ENCODE measurements at regions of chr11 and their contacts with region 1.

Region 1: DNA sequence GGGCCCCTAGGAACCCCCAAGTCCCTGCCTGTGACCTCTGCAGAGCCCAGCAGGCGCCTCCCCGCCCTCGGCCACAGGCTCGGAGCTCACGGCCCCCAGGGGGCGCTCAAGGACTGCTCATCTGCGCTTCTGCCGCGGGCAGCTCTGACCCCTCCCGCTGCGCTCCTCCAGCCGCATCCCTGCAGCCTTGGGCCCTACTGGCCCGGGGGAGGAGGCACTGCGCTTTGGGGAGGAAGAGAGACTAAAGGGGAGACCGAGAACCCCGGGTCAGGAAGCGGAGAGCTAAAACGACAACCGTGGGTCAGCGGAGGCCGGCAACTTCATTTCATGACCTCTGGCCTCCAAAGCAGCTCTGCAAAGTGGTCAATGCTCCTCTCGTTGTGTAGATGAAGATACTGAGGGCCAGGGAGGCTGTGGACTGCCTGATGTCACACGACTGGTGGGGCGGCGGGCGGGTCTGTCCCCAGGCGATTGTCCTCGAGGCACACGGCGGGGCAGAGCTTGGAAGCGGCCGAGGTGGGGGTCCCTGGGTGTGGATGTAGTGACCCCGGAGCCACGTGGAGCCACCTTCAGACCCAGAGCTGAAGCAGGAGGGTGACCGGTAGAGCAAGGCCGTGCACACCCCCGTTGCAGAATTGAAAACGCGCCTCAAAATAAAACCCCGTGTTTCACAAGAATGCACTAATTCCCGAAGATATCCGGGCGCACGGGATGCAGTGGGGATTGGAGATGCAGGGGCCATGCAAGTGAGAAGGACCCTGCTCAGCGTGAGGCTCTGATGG is 2.7 kb upstream of the KRTAP5-6 start:
- DNase-seq: peak; percentile 95
- H3K4me3 Mint-ChIP-seq: no peak overlapping the region
- H3K27ac Mint-ChIP-seq: no peak overlapping the region
- H3K4me1 Mint-ChIP-seq: peaks cover 5% of the 10 kb centered on the region
- H3K27me3 Mint-ChIP-seq: peaks cover 15% of the 10 kb centered on the region

Region 2: DNA sequence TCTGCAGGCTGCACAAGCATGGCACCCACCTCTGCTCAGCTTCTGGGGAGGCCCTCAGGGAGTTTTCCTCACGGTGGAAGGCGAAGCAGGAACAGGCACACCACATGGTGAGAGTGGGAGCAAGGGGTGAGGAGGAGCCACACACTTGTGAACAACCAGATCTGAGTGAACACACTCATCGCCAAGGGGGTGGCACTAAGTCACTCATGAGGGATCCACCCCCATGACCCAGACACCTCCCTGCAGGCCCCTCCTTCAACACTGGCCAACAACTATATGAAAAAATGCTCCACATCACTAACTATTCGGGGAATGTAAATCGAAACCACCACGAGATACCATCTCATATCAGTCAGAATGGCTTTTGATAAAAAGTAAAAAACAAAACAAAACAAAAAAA is 95.4 kb before region 1 on chr11:
- intact Hi-C with region 1: no loop called
- DNase-seq: no peak
- H3K4me3 Mint-ChIP-seq: no peak overlapping the region
- H3K27ac Mint-ChIP-seq: no peak overlapping the region
- H3K4me1 Mint-ChIP-seq: peaks cover 2% of the 10 kb centered on the region
- H3K27me3 Mint-ChIP-seq: peaks cover 64% of the 10 kb centered on the region

Region 3: DNA sequence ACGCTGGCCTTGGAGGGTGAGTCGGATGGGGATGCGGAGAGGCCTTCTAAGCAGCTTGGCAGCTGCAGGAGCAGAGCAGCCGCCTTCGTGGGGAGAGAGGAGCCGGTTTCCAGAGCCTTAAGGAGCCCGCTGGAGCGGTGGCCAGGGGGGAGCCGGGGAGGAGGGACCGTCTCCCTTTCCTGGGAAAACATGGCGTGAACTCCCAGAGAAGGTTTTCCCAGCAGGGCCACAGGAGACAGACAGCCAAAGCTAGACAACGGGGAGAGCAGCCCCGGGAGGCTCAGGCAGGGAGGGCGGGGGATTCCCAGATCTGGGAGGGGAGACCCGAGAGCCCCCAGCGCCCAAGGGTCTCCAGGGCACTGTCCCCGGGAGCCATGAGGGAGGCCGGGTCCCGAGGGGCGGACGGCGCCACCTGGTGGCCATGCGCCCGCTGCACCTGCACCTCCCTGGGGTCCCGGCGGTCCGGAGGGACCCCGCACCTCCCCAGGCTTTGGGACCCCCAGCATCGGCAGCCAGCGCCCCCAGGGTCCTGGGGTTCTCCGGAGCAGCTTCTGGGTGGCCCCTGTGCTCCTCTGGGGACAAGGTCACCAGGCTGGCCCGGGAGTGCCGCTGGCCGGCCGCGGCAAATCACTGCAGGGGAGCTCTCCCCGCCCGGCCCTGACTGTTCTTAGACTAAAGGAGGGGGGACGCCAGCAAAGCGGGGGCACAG is 138.1 kb after region 1 on chr11:
- intact Hi-C with region 1: loop called (anchors 1 kb)
- DNase-seq: peak; percentile 91
- H3K4me3 Mint-ChIP-seq: no peak overlapping the region
- H3K27ac Mint-ChIP-seq: no peak overlapping the region
- H3K4me1 Mint-ChIP-seq: no peaks in the 10 kb centered on the region
- H3K27me3 Mint-ChIP-seq: peaks cover 3% of the 10 kb centered on the region

Region 4: GRCh38 chr11:2549876-2550620 is 855.8 kb after region 1 on chr11:
- intact Hi-C with region 1: no loop called
- DNase-seq: no peak
- H3K4me3 Mint-ChIP-seq: no peak overlapping the region
- H3K27ac Mint-ChIP-seq: no peak overlapping the region
- H3K4me1 Mint-ChIP-seq: peaks cover 2% of the 10 kb centered on the region
- H3K27me3 Mint-ChIP-seq: peaks cover 3% of the 10 kb centered on the region

Measured in activated CD4-positive, alpha-beta T cell treated with anti-CD3 and anti-CD28 coated beads, Interleukin-2, amount 10 ng/mL, durations not matched to agents 24 days and 14 days (primary cell).